Thyroid gland (tissue), 4 donors: ENCODE measurements at regions of chr7 and their contacts with region 1.

Region 1: GRCh38 chr7:124688991-124689390 is 76.6 kb downstream of the GPR37 start:
- DNase-seq: no peak
- H3K4me3 ChIP-seq: no peak overlapping the region
- H3K27ac ChIP-seq: no peak overlapping the region
- H3K4me1 ChIP-seq: no peaks in the 10 kb centered on the region
- H3K27me3 ChIP-seq: no peaks in the 10 kb centered on the region
- CTCF ChIP-seq: no peak
- POLR2A ChIP-seq: no peak

Region 2: DNA sequence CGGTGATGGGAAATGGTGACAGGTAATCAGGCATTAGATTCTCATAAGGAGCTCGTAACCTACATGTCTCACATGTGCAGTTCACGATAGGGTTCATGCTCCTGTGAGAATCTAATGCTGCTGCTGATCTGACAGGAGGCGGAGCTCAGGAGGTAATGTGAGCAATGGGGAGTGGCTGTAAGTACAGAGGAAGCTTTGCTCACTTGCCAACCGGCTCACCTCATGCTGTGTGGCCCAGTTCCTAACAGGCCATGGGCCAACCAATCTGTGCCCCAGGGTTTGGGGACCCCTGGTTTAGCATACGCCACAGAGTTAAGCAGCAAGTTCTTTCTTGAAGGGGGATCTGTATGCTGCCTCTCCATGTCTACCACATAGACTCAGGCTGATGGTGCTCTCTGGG is 1287.7 kb before region 1 on chr7:
- intact Hi-C with region 1: no loop called
- DNase-seq: no peak
- H3K4me3 ChIP-seq: no peak overlapping the region
- H3K27ac ChIP-seq: no peak overlapping the region
- H3K4me1 ChIP-seq: peaks cover 12 to 17% of the 10 kb centered on the region in 2 donors
- H3K27me3 ChIP-seq: no peaks in the 10 kb centered on the region
- CTCF ChIP-seq: no peak
- POLR2A ChIP-seq: no peak

Region 3: GRCh38 chr7:124720195-124720594 is 31.2 kb after region 1 on chr7:
- intact Hi-C with region 1: loop called (anchors 2 kb)
- DNase-seq: no peak
- H3K4me3 ChIP-seq: no peak overlapping the region
- H3K27ac ChIP-seq: no peak overlapping the region
- H3K4me1 ChIP-seq: no peaks in the 10 kb centered on the region
- H3K27me3 ChIP-seq: no peaks in the 10 kb centered on the region
- CTCF ChIP-seq: no peak
- POLR2A ChIP-seq: no peak